ENCODE measurements at regions of chr12 and their contacts with region 1.

Region 1: DNA sequence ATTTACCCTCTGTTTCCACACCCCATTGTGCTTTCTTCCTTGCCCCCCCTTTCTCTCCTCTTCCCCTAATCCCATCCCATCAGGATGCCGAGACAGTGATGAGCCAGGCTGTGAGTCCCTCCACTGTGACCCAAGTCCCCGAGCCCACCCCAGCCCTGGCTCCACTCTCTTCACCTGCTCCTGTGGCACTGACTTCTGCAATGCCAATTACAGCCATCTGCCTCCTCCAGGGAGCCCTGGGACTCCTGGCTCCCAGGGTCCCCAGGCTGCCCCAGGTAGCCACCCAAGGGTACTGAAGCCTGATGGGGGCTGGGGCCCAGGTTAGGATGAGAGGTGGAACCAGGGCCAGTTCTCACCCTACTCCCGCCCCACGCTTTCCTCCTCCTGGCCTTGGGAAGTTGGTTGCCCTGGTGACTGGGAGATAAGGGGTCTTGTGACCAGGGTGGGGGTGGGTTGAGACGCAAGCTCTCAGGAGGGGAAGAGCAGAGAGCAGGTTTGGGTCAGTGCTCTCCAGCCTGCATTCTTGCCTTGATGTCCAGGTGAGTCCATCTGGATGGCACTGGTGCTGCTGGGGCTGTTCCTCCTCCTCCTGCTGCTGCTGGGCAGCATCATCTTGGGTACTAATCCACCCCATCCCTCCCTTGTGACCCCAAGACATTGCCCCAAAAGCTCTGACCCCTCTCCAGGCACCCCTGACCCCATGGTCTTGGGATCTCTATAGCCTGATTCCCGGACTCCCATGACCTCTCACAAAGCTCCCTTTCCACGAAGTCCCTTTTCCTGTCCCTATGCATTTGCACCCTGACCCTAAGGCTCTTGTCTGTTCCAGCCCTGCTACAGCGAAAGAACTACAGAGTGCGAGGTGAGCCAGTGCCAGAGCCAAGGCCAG is 1.2 kb downstream of the AMHR2 start:
- DNase-seq: no peak
- H3K4me3 ChIP-seq: no peak overlapping the region
- H3K27ac ChIP-seq: no peak overlapping the region
- H3K4me1 ChIP-seq: peaks cover 0 to 9% (median 8%) of the 10 kb centered on the region in 4 donors
- H3K27me3 ChIP-seq: no peaks in the 10 kb centered on the region
- CTCF ChIP-seq: no peak
- EP300 ChIP-seq: no peak
- POLR2A ChIP-seq: no peak

Region 2: DNA sequence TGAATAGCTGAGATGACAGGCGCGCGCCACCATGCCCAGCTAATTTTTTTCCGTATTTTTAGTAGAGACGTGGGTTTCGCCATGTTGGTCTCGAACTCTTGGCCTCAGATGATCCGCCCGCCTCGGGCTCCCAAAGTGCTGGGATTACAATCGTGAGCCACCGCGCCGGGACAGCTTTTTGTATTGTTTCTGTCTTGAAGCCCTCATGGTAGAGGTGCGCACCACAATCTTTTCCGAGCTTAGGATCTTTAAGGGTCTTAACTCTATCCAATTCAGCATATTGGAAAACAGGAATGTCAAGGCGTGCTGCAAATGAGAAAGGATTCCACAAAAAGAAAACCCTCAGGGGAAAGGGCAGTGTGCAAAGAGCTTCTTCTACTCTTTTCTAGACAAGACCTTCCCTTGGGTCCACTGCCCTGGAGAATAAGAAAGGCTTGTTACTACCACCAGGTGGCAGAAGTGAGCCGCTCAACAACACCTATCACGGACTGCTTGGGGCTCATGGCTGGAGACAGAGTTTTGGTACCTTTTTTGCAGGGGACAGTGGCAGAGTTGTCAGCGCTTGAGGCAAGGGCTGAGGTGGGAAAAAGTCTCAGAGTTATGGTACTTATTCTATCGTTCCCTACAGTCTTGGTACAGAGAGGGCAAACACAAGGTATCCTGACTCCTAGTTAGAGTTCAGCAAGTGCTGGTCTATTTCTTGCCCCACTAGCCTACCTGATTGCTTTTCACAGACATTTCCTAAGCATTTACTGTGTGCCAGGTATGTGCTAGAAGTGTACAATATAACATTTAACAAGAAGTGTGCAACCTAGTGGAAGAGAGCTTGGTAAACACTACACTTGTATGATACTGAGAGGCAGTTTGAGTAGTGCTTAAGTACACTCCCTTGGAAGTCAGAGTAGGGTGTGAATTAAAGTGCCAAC is 72.3 kb before region 1 on chr12:
- intact Hi-C with region 1: loop called (anchors 1 kb)
- DNase-seq: peak; percentile 92
- H3K4me3 ChIP-seq: no peak overlapping the region
- H3K27ac ChIP-seq: no peak overlapping the region
- H3K4me1 ChIP-seq: peaks cover 0 to 8% (median 4%) of the 10 kb centered on the region in 4 donors
- H3K27me3 ChIP-seq: no peaks in the 10 kb centered on the region
- CTCF ChIP-seq: peak; percentile 83 to 94 (median 90)
- EP300 ChIP-seq: no peak
- POLR2A ChIP-seq: no peak

Measured in sigmoid colon (tissue), 7 donors.